Activated naive CD4-positive, alpha-beta T cell treated with anti-CD3 and anti-CD28 coated beads for 36 hours (primary cell): ENCODE measurements at regions of chr4 and their contacts with region 1.

Region 1: DNA sequence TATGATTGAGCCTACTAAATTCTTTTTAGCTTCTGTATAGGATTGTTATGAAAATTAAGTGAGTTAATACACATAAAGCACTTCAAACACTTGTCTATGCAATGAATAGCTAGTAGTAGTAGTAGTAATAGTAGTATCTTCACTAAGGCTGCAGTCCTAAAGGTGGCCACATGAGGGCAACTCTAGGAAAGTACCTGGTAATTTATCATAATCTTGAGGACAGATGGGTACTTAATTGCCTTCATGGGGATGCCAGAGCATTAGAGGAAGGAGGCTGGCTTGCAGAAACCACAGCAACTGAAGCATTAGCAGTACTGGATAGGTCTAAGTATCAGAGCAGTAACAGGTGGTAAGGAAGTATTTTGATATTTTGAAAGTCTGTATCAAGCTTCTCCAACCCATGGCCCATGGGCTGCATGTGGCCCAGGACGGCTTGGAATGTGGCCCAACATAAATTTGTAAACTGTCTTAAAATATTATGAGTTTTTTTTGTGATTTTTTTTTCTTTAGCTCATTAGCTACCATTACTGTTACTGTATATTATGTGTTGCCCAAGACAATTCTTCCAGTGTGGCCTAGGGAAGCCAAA is 17.3 kb downstream of the NIPAL1 start:
- DNase-seq: peak; percentile 87
- H3K4me3 Mint-ChIP-seq: no peak overlapping the region
- H3K27ac Mint-ChIP-seq: no peak overlapping the region
- H3K4me1 Mint-ChIP-seq: peaks cover 56% of the 10 kb centered on the region
- H3K27me3 Mint-ChIP-seq: no peaks in the 10 kb centered on the region

Region 2: DNA sequence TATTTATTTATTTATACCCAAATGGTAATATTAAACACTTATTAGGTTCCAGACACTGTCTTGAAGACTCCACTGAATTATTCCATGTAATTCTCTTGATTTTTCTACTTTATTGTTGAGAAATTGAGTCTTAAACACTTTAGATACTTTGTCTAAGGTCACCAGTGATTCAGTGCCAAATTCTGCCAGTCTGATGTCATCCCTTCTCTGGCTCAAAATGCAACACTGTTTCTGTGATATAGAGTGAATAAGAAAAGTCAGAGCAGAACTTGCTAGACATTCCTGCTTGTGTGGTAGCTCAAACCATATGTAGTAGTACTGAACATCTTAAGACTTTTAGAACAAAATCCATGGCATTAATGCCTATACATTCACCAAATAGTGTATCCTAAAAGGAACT is 838.2 kb before region 1 on chr4:
- CTCF ChIA-PET with region 1: no interaction called
- intact Hi-C with region 1: no loop called
- DNase-seq: no peak
- H3K4me3 Mint-ChIP-seq: no peak overlapping the region
- H3K27ac Mint-ChIP-seq: no peak overlapping the region
- H3K4me1 Mint-ChIP-seq: no peaks in the 10 kb centered on the region
- H3K27me3 Mint-ChIP-seq: peaks cover 2% of the 10 kb centered on the region

Region 3: DNA sequence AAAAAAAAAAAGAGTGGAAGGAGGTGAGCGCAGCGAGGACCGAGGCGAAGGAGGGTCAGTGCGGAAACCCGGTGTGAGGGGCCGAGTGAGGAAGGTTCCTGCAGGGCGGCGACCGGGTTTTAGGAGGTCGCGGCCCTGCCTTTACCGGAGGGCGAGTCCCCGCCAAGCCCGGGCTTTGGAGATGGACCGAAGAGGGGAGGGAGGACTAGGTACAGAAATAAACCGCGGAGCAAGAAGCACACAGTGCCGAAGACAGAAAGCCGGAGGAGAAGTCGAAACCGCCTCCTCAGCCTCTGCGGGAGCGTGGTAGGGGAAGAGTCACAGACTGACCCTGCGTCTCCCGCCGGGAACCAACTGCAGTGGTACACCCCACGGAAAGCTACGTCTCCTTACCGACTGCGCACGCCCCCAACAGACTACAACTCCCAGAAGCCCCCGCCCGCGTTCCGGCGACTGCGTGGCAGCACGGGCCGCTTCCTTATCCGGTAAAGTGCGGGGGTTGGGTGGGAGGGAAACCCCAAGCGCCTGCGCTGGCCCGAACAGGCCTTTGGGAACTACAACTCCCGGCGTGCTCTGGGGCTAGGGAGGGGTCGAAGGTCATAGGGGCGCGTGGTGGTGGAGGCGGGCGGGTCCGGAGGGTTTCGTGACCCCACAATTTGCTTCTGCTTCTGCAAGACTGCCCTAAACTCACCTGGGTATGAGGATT is 119.5 kb before region 1 on chr4 and contains the start of gene NFXL1:
- CTCF ChIA-PET with region 1: no interaction called
- intact Hi-C with region 1: loop called (anchors 1 kb)
- DNase-seq: peak; percentile 97
- H3K4me3 Mint-ChIP-seq: peak within 1 kb of the TSS; percentile 90
- H3K27ac Mint-ChIP-seq: peak within 1 kb of the TSS; percentile 91
- H3K4me1 Mint-ChIP-seq: peaks cover 29% of the 10 kb centered on the region
- H3K27me3 Mint-ChIP-seq: no peaks in the 10 kb centered on the region
- total RNA-seq, gene NFXL1: 10.4 to 11.4 TPM

Region 4: DNA sequence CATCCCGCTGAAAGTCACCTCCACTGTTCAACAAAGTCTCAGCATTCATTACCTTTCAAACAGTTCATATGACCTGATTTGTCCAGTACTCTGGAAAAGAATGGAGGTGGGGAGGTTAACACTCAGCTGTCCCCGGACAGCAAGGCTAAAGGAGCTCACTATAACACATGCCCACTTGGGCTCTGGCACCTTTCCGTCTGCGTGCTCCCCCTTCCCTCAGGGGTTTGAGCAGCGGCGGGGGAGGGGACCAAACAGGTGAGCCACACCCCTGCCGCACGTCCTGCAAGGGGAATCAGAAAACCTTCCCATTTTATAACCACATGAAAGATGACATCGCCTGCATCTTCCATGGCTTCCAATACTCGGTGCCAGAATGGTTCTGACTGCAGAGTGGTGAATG is 79.7 kb before region 1 on chr4:
- CTCF ChIA-PET with region 1: no interaction called
- intact Hi-C with region 1: no loop called
- DNase-seq: no peak
- H3K4me3 Mint-ChIP-seq: no peak overlapping the region
- H3K27ac Mint-ChIP-seq: no peak overlapping the region
- H3K4me1 Mint-ChIP-seq: no peaks in the 10 kb centered on the region
- H3K27me3 Mint-ChIP-seq: no peaks in the 10 kb centered on the region

Region 5: DNA sequence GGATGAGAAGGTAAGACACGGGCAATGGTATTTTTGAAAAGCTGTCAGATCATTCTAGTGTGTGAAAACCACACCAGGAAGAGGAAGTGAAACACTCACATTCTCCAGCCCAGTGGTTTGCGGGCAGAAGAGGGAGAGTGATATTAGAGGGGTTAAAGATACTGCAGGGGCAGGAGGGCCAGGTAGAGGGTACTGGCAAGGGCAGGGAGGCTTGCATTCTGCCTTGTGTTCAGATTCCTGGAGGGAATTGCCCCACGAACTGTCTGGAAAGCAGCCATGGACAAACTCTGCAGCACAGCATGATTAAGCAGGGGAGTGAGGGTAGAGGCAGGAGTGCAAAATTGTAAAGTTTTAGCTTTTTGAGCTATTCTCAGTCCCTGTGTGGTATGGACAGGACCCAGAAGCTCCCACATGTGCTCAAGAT is 13.5 kb after region 1 on chr4:
- CTCF ChIA-PET with region 1: interaction called, 105 read pairs
- intact Hi-C with region 1: loop called (anchors 1 kb)
- DNase-seq: peak; percentile 91
- H3K4me3 Mint-ChIP-seq: peak overlapping the region; percentile 1
- H3K27ac Mint-ChIP-seq: no peak overlapping the region
- H3K4me1 Mint-ChIP-seq: peaks cover 58% of the 10 kb centered on the region
- H3K27me3 Mint-ChIP-seq: no peaks in the 10 kb centered on the region

Region 6: DNA sequence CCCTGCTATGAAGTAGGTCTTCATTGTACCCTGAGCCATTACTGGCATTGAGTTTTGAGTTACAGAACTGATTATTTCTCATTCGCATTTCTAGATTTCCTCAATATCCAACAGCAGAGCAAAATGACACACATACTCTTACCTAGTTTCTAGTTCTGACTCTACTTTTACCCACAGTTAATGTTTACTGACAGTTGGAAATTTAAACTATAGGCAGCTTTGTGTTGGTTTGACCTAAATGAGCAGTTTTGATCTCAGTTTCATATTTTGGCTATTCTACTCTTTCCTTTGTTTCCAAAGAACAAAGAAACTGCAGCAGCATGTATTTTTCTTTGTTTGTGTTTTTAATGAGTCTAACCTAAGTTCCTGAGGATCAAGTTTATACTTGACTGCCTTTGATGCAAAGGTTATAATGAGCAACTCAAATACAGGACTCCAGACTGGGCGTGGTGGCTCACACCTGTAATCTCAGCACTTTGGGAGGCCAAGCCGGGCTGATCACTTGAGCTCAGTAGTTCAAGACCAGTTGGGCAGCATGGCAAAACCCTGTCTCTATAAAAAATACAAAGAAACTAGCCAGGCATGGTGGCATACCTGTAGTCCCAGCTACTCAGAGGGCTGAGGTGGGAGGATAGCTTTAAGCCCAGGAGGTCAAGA is 69.7 kb after region 1 on chr4:
- CTCF ChIA-PET with region 1: interaction called, 26 read pairs
- intact Hi-C with region 1: loop called (anchors 1 kb)
- DNase-seq: peak; percentile 64
- H3K4me3 Mint-ChIP-seq: no peak overlapping the region
- H3K27ac Mint-ChIP-seq: peak overlapping the region; percentile 93
- H3K4me1 Mint-ChIP-seq: peaks cover 46% of the 10 kb centered on the region
- H3K27me3 Mint-ChIP-seq: no peaks in the 10 kb centered on the region

Region 7: DNA sequence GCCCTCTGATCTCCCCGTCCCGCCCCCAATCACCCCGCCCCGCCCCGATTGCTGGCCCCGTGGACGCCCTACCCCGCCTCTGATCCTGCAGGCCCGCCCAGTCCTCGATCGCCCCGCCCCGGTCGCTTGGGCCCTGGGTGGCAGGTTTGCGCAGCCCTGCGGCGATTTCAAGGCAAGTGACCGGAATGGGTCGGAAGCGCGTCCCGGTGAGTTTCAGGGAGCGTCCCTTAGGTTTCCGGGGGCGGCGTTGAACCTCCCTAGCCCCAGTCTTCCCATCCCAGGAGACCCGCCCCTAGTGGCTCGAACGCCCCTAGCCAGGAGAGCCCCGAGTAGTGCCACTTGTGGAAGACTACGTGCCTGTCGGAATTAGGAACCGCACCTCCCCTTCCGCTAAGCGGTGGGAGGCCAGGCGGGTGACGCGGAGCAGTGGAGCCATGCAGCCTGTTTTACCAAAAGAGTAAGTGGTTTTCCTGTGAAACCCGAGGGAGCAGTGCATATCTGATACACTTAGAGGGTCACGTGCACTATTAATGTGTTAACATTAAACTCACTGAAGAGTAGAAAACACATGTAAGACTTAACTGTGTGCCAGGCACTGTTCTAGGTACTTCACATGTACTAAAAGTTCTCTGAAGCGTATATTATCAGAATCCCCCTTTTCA is 236.1 kb after region 1 on chr4:
- CTCF ChIA-PET with region 1: no interaction called
- intact Hi-C with region 1: loop called (anchors 1 kb)
- DNase-seq: peak; percentile 93
- H3K4me3 Mint-ChIP-seq: peak overlapping the region; percentile 93
- H3K27ac Mint-ChIP-seq: peak overlapping the region; percentile 83
- H3K4me1 Mint-ChIP-seq: peaks cover 9% of the 10 kb centered on the region
- H3K27me3 Mint-ChIP-seq: no peaks in the 10 kb centered on the region